ENCODE measurements at regions of chr5 and their contacts with region 1.

Region 1: GRCh38 chr5:128201065-128201926 is 117.7 kb downstream of the SLC12A2 start:
- DNase-seq: peak; percentile 71
- H3K4me3 Mint-ChIP-seq: no peak overlapping the region
- H3K27ac Mint-ChIP-seq: no peak overlapping the region
- H3K4me1 Mint-ChIP-seq: peaks cover 23% of the 10 kb centered on the region
- H3K27me3 Mint-ChIP-seq: peaks cover 17% of the 10 kb centered on the region

Region 2: DNA sequence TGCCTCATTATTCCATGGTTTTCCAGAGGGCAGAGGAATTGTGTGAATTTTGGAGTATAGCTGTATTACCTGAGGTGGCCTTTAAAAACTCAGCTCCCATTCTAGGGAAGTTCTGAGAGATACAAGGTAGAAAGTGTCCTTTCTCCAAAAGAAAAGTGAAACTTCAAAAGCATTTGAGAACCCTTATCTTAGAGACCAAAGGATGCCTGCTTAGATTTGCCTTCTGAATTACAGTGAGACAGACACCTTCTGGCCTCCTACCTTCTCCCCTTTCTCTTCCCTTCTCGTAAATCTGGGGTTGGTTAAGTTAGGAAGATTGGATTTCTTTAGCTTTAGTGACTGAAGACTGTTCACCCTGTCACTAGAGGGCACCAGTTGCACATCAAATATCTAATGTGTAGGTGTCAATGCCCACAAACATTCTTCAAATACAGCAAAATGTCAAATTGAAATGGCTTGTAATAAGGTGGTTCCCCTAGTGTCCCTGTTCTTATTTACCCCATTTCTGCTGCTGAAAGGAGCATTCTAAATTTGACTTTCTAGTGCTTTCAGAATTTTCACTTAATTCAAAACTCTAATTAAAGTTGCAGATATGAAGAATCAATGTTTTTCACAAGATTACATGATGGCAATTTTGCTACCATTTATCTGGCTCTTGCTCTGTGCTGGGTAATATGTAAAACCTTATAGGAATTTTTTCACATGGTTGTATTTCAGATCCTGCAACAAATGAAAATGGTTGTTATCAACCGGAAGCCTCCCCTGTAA is 637.1 kb before region 1 on chr5:
- intact Hi-C with region 1: loop called (anchors 1 kb)
- DNase-seq: peak; percentile 16
- H3K4me3 Mint-ChIP-seq: no peak overlapping the region
- H3K27ac Mint-ChIP-seq: no peak overlapping the region
- H3K4me1 Mint-ChIP-seq: peaks cover 15% of the 10 kb centered on the region
- H3K27me3 Mint-ChIP-seq: peaks cover 11% of the 10 kb centered on the region

Region 3: DNA sequence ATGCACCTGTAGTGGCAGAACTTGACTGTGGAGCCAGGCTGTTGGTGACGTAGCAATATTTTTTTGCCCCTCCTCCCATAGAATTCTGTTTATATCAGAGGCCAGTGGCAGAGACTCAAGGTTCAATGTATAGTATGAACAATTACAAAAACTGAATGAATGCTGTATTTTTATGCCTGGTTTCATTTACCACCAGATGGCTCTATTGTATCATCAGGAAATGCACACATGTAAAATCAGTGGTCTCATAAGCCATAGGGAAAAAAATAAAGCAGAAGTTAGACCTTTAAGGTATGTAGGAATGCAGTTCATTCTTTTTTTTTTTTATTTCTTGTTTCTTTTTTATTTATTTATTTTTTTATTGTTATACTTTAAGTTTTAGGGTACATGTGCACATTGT is 454.5 kb before region 1 on chr5:
- intact Hi-C with region 1: loop called (anchors 1 kb)
- DNase-seq: no peak
- H3K4me3 Mint-ChIP-seq: no peak overlapping the region
- H3K27ac Mint-ChIP-seq: no peak overlapping the region
- H3K4me1 Mint-ChIP-seq: no peaks in the 10 kb centered on the region
- H3K27me3 Mint-ChIP-seq: peaks cover 2% of the 10 kb centered on the region

Region 4: GRCh38 chr5:127757576-127757975 is 443.7 kb before region 1 on chr5:
- intact Hi-C with region 1: loop called (anchors 1 kb)
- DNase-seq: no peak
- H3K4me3 Mint-ChIP-seq: no peak overlapping the region
- H3K27ac Mint-ChIP-seq: no peak overlapping the region
- H3K4me1 Mint-ChIP-seq: no peaks in the 10 kb centered on the region
- H3K27me3 Mint-ChIP-seq: peaks cover 3% of the 10 kb centered on the region

Region 5: GRCh38 chr5:127875235-127876021 is 325.9 kb before region 1 on chr5:
- intact Hi-C with region 1: loop called (anchors 1 kb)
- DNase-seq: peak; percentile 0
- H3K4me3 Mint-ChIP-seq: no peak overlapping the region
- H3K27ac Mint-ChIP-seq: no peak overlapping the region
- H3K4me1 Mint-ChIP-seq: no peaks in the 10 kb centered on the region
- H3K27me3 Mint-ChIP-seq: peaks cover 5% of the 10 kb centered on the region

Region 6: GRCh38 chr5:127909078-127909477 is 292.2 kb before region 1 on chr5:
- intact Hi-C with region 1: loop called (anchors 1 kb)
- DNase-seq: no peak
- H3K4me3 Mint-ChIP-seq: no peak overlapping the region
- H3K27ac Mint-ChIP-seq: no peak overlapping the region
- H3K4me1 Mint-ChIP-seq: peaks cover 10% of the 10 kb centered on the region
- H3K27me3 Mint-ChIP-seq: peaks cover 13% of the 10 kb centered on the region

Measured in activated T-helper 1 cell treated with anti-CD3 and anti-CD28 coated beads, Interleukin-12 subunit alpha, Interleukin-12 subunit beta, Interleukin-2, Interleukin-4 antibody, amounts not matched to agents 30 ng/mL and 10 ng/mL and 1 ng/mL, durations not matched to agents 14 hours and 24 hours and 36 hours (primary cell).